ENCODE measurements at regions of chr17 and their contacts with region 1.

Region 1: DNA sequence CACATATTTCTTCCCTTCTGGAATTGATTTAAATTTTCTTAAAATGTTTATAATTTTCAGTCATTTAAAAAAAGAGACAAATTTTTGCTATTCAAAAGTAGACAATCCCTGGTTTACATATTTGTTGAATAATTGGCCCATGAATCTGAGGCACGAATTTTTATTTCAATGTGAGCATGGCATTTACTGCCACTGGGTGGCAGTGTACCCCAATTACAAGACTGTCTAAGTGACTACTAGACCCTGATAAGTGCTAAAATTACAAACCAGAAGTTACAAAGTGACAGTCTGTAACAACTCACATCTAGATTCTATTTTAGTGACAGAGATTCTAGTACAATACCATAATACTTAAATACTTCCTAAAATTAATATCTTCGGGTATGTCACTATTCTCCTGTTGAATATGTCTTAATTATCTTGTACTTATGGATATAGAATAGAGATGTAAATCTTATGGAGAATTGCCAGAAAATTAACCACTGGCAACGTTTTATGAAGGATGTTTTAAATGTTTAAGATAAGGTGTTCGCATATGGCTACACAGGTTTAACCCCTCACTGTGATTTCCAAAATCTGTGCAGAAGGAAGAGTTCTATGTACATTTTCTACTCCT is 235.8 kb downstream of the MAP2K4 start:
- DNase-seq: peak; percentile 39
- H3K4me3 ChIP-seq: no peak overlapping the region
- H3K27ac ChIP-seq: no peak overlapping the region
- H3K4me1 ChIP-seq: no peaks in the 10 kb centered on the region
- H3K27me3 ChIP-seq: no peaks in the 10 kb centered on the region
- CTCF ChIP-seq: peak; percentile 51 to 52
- POLR2A ChIP-seq: no peak

Region 2: GRCh38 chr17:12118617-12119016 is 137.9 kb before region 1 on chr17:
- CTCF ChIA-PET with region 1: no interaction called
- POLR2A ChIA-PET with region 1: no interaction called
- dilution Hi-C with region 1: no loop called
- intact Hi-C with region 1: no loop called
- DNase-seq: no peak
- H3K4me3 ChIP-seq: no peak overlapping the region
- H3K27ac ChIP-seq: no peak overlapping the region
- H3K4me1 ChIP-seq: no peaks in the 10 kb centered on the region
- H3K27me3 ChIP-seq: no peaks in the 10 kb centered on the region
- CTCF ChIP-seq: no peak
- POLR2A ChIP-seq: no peak

Region 3: GRCh38 chr17:12328204-12328603 is 71.7 kb after region 1 on chr17:
- CTCF ChIA-PET with region 1: no interaction called
- POLR2A ChIA-PET with region 1: no interaction called
- dilution Hi-C with region 1: no loop called
- intact Hi-C with region 1: no loop called
- DNase-seq: no peak
- H3K4me3 ChIP-seq: no peak overlapping the region
- H3K27ac ChIP-seq: no peak overlapping the region
- H3K4me1 ChIP-seq: no peaks in the 10 kb centered on the region
- H3K27me3 ChIP-seq: no peaks in the 10 kb centered on the region
- CTCF ChIP-seq: no peak
- POLR2A ChIP-seq: no peak

Region 4: DNA sequence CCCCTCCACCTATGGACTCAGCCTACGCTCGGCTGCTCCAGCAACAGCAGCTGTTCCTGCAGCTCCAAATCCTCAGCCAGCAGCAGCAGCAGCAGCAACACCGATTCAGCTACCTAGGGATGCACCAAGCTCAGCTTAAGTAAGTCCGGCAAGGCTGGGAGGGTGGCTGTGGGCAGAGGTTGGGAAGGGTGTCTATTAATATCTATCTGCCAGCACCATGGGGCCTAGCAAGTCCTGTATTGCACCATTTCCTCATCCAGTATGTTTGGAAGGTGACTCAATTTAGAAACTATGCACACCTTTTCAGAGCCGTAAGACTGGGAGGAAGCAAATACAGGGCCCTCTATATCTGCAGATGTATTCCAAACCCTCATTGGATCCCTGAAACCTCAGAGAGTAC is 487.8 kb after region 1 on chr17:
- CTCF ChIA-PET with region 1: interaction called, 20 read pairs
- POLR2A ChIA-PET with region 1: no interaction called
- dilution Hi-C with region 1: no loop called
- intact Hi-C with region 1: loop called (anchors 1 kb)
- DNase-seq: no peak
- H3K4me3 ChIP-seq: no peak overlapping the region
- H3K27ac ChIP-seq: no peak overlapping the region
- H3K4me1 ChIP-seq: no peaks in the 10 kb centered on the region
- H3K27me3 ChIP-seq: no peaks in the 10 kb centered on the region
- CTCF ChIP-seq: no peak
- POLR2A ChIP-seq: no peak

Measured in endothelial cell of umbilical vein (primary cell).